ENCODE measurements at regions of chr16 and their contacts with region 1.

Region 1: DNA sequence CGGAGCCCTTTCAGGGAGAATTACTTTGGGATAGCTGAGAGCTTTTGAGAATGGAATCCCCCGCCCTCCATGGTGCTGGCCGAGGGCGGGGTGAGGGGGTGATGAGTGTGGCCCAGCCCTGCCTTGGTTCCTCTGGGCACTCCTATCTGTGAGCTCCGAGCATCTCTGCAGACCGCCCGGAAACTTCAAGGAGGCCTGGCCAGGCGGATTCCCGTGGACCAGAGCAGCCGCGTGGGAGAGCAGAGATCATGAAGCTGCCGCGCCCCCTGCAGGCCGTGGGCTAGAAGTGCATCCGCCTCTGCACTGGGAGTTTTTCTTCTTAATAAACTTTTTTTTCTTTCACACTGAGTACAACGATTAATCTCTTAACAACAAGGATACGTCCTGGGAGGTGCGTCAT is 392.9 kb upstream of the EEF2KMT start:
- DNase-seq: peak in 1 of 2 experiments; percentile 85
- H3K4me3 ChIP-seq: no peak overlapping the region
- H3K27ac ChIP-seq: no peak overlapping the region
- H3K4me1 ChIP-seq: no peaks in the 10 kb centered on the region
- H3K27me3 ChIP-seq: no peaks in the 10 kb centered on the region
- CTCF ChIP-seq: peak; percentile 88 to 93 (median 92)
- EP300 ChIP-seq: no peak
- POLR2A ChIP-seq: no peak
- RAD21 ChIP-seq: peak; percentile 89 to 93

Region 2: DNA sequence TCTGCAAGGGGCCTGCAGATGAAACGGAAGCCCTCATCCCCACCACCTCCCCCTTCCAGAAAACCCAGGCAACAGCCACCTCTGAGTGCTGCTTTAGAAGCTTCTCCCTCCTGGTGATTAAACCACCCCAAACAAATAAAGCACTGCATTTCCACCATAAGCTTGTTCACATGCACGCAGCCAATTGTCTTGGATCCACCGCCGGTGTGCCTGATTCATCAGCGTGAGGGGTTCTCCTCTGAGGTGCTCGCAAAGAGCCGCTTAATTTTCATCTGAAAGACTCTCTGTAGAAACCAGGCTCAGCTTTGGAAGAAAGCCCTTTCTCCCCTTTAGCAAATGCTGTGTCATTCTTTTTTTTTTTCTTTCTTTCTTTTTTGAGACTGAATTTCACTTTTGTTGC is 237.7 kb before region 1 on chr16:
- CTCF ChIA-PET with region 1: interaction called, 11 read pairs
- POLR2A ChIA-PET with region 1: no interaction called
- DNase-seq: no peak
- H3K4me3 ChIP-seq: no peak overlapping the region; a peak in 1 of 8 replicates
- H3K27ac ChIP-seq: no peak overlapping the region
- H3K4me1 ChIP-seq: peaks cover 3 to 17% (median 8%) of the 10 kb centered on the region in 4 experiments
- H3K27me3 ChIP-seq: no peaks in the 10 kb centered on the region
- CTCF ChIP-seq: no peak
- EP300 ChIP-seq: no peak
- POLR2A ChIP-seq: no peak
- RAD21 ChIP-seq: no peak

Region 3: GRCh38 chr16:5428932-5429331 is 61.6 kb before region 1 on chr16:
- CTCF ChIA-PET with region 1: interaction called, 29 read pairs
- POLR2A ChIA-PET with region 1: interaction called, 3 read pairs
- DNase-seq: peak in 1 of 2 experiments; percentile 68
- H3K4me3 ChIP-seq: no peak overlapping the region
- H3K27ac ChIP-seq: no peak overlapping the region
- H3K4me1 ChIP-seq: peaks cover 3 to 8% (median 6%) of the 10 kb centered on the region in 4 experiments; a peak in 6 of 7 replicates
- H3K27me3 ChIP-seq: 0 out of 7 replicates have a peak, but pooled peaks cover 0 to 2% (median 0%) of the 10 kb centered on the region in 4 experiments
- CTCF ChIP-seq: peak; percentile 70 to 84 (median 83)
- EP300 ChIP-seq: no peak
- POLR2A ChIP-seq: no peak
- RAD21 ChIP-seq: peak; percentile 60 to 73

Region 4: GRCh38 chr16:5466551-5466950 is 23.9 kb before region 1 on chr16:
- CTCF ChIA-PET with region 1: interaction called, 29 read pairs
- POLR2A ChIA-PET with region 1: no interaction called
- DNase-seq: no peak
- H3K4me3 ChIP-seq: no peak overlapping the region
- H3K27ac ChIP-seq: no peak overlapping the region
- H3K4me1 ChIP-seq: no peaks in the 10 kb centered on the region; a peak in 1 of 7 replicates
- H3K27me3 ChIP-seq: no peaks in the 10 kb centered on the region; a peak in 2 of 7 replicates
- CTCF ChIP-seq: peak; percentile 50 to 74 (median 69); a peak in 3 of 4 replicates
- EP300 ChIP-seq: no peak
- POLR2A ChIP-seq: no peak
- RAD21 ChIP-seq: peak; percentile 52 to 67

Region 5: DNA sequence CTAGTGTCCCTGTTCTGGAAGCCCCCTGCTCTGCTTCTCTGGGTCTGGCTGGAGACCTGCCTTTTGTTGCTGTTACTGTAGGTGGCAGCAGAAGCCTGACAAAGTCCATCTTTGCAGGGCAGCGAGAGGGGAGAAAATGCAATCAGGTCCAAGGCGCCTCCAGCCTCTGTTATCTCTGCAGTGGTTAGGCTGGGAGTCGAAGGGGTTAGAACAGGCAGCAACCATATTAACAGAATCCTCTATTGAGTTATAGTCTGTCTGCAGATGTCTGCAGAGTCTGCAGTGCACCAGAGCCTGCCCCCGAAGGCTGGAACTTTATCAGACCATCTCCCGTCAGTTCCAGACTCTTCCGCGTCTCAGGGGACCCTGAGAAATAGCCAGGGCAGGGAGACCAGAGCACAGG is 12.0 kb after region 1 on chr16:
- CTCF ChIA-PET with region 1: interaction called, 12 read pairs
- POLR2A ChIA-PET with region 1: no interaction called
- DNase-seq: peak; percentile 39 to 73
- H3K4me3 ChIP-seq: no peak overlapping the region
- H3K27ac ChIP-seq: no peak overlapping the region
- H3K4me1 ChIP-seq: 0 out of 7 replicates have a peak, but pooled peaks cover 0 to 6% (median 0%) of the 10 kb centered on the region in 4 experiments
- H3K27me3 ChIP-seq: no peaks in the 10 kb centered on the region
- CTCF ChIP-seq: peak; percentile 71 to 93 (median 91)
- EP300 ChIP-seq: no peak
- POLR2A ChIP-seq: no peak
- RAD21 ChIP-seq: peak; percentile 96 to 98

Region 6: GRCh38 chr16:5541356-5541755 is 50.9 kb after region 1 on chr16:
- CTCF ChIA-PET with region 1: no interaction called
- POLR2A ChIA-PET with region 1: no interaction called
- DNase-seq: no peak
- H3K4me3 ChIP-seq: no peak overlapping the region
- H3K27ac ChIP-seq: no peak overlapping the region
- H3K4me1 ChIP-seq: no peaks in the 10 kb centered on the region; a peak in 3 of 7 replicates
- H3K27me3 ChIP-seq: no peaks in the 10 kb centered on the region
- CTCF ChIP-seq: no peak
- EP300 ChIP-seq: no peak
- POLR2A ChIP-seq: no peak
- RAD21 ChIP-seq: no peak

Region 7: GRCh38 chr16:5615868-5616642 is 125.6 kb after region 1 on chr16:
- CTCF ChIA-PET with region 1: interaction called, 19 read pairs
- POLR2A ChIA-PET with region 1: no interaction called
- DNase-seq: peak; percentile 62 to 88
- H3K4me3 ChIP-seq: peak overlapping the region; percentile 34 to 57 (median 39); a peak in 5 of 8 replicates
- H3K27ac ChIP-seq: no peak overlapping the region
- H3K4me1 ChIP-seq: peaks cover 0 to 2% (median under 1%) of the 10 kb centered on the region in 4 experiments; a peak in 1 of 7 replicates
- H3K27me3 ChIP-seq: no peaks in the 10 kb centered on the region
- CTCF ChIP-seq: peak; percentile 94 to 96 (median 95)
- EP300 ChIP-seq: no peak
- POLR2A ChIP-seq: no peak
- RAD21 ChIP-seq: peak; percentile 91 to 92

Measured in H1 (cell line).